K562 (cell line): ENCODE measurements at regions of chr20 and their contacts with region 1.

Region 1: DNA sequence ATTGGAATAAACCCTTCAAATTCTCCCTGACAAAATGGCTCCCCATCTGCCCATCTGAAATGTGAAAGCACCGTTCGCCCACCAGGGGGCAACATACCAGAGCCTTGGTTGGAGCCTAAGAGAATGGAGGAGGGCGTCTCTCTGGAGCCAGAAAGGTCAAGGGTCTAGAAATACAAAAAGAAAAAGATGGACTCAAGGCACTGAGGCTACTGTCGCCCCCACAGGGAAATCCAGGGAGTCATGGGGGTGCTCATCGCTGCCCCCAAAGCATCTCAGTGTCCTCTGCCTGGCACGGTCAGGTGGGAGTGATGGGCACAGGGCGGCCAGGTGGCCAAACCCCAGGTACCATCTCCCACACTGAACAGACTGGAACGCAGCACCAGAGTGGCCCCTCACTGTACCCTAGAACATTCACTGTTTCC is 136.3 kb downstream of the ZMYND8 start:
- DNase-seq: peak; percentile 41 to 72 (median 58)
- ATAC-seq: peak; percentile 88
- H3K4me3 ChIP-seq: no peak overlapping the region
- H3K27ac ChIP-seq: no peak overlapping the region
- H3K4me1 ChIP-seq: peaks cover 0 to 4% of the 10 kb centered on the region in 2 experiments; a peak in 2 of 5 replicates
- H3K27me3 ChIP-seq: no peaks in the 10 kb centered on the region; a peak in 1 of 5 replicates
- CTCF ChIP-seq: peak; percentile 65 to 72 (median 68)
- EP300 ChIP-seq: no peak
- POLR2A ChIP-seq: no peak
- RAD21 ChIP-seq: peak in 1 of 2 experiments; percentile 33; a peak in 2 of 4 replicates

Region 2: DNA sequence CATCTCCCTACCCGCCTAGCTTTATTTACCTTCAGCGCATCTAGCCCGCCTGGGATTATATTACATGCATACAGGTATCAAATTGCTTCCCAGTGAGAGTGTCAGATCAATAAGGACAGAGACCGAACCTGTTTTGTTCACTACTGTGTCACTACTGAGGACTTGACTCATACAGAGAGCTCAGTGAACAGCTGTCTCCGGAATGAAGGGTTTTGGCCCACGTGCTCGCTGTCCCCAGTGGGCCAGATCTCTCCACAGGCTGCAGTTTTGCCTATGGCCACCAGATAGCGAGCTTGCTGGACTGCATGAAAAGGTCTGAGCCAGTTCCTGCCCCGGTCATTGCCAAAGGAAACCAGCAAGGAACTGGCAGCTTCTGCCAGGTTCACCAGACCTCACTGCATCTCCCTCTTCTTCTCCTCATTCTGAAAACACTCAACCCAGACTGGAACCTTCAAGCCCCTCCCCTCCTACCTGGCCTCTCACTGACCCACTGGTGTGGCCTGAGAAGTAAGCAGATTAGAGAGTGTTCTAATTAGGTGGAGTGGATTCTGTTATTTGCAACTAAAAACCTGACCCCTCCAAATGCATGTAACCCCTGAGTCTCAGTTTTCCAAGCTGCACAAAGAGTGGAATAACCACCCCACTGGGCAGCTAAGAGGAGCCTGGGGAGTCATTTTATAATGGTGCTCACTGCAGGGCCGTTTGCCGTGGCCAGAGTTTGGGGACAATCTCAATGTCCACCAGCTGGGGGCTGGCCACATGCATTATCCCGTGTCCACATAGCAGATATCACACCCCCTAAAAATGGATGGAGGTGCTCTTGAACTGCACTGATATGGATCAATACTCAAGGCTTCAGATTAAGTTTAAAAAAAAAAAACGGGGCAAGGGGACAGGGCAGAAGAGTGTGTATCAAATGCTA is 14.3 kb before region 1 on chr20:
- CTCF ChIA-PET with region 1: interaction called, 3 read pairs
- POLR2A ChIA-PET with region 1: interaction called, 12 read pairs
- in situ Hi-C with region 1: no loop called
- intact Hi-C with region 1: no loop called
- DNase-seq: peak; percentile 66 to 76 (median 70)
- ATAC-seq: peak; percentile 85
- H3K4me3 ChIP-seq: no peak overlapping the region
- H3K27ac ChIP-seq: peak overlapping the region; percentile 41; the same call in 2 of the 3 replicates
- H3K4me1 ChIP-seq: peaks cover 12 to 21% of the 10 kb centered on the region in 2 experiments; a peak in 3 of 5 replicates
- H3K27me3 ChIP-seq: no peaks in the 10 kb centered on the region
- CTCF ChIP-seq: peak; percentile 68 to 90 (median 78)
- EP300 ChIP-seq: no peak
- POLR2A ChIP-seq: no peak
- RAD21 ChIP-seq: peak; percentile 22 to 68; a peak in 3 of 4 replicates

Region 3: GRCh38 chr20:47432211-47433210 is 212.3 kb after region 1 on chr20:
- CTCF ChIA-PET with region 1: no interaction called
- POLR2A ChIA-PET with region 1: no interaction called
- in situ Hi-C with region 1: no loop called
- intact Hi-C with region 1: no loop called
- DNase-seq: peak in 1 of 4 experiments; percentile 52
- ATAC-seq: peak; percentile 62
- H3K4me3 ChIP-seq: peak overlapping the region; percentile 6; the same call in 1 of the 2 replicates
- H3K27ac ChIP-seq: peak overlapping the region; percentile 56; the same call in 2 of the 3 replicates
- H3K4me1 ChIP-seq: peaks cover 10% of the 10 kb centered on the region in 2 experiments; a peak in 4 of 5 replicates
- H3K27me3 ChIP-seq: no peaks in the 10 kb centered on the region
- CTCF ChIP-seq: no peak
- EP300 ChIP-seq: no peak
- POLR2A ChIP-seq: no peak
- RAD21 ChIP-seq: no peak